MCF 10A (cell line): ENCODE measurements at regions of chr15 and their contacts with region 1.

Region 1: DNA sequence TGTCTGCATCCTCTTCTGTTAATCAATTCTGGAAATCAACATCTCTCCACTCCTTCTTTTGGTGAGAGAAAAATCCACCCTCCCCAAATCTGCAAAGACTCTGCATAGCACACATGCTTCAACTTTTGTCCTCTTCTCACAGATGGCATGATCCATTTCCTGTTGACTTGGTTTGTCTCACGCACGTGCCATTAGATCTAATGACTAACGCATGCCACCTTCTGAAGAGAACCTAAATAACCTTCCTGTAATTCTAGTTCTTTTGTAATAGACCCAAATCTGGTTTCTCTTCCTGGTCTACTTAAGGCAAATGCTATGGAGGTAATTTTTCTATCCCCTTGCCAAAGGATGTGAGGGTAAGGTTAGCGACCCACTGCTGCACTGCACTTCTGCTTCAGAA is 51.0 kb upstream of the ATOSA start:
- DNase-seq: peak; percentile 66
- H3K4me3 Mint-ChIP-seq: no peak overlapping the region
- H3K27ac Mint-ChIP-seq: peak overlapping the region; percentile 49
- H3K4me1 Mint-ChIP-seq: peaks cover 13% of the 10 kb centered on the region
- H3K27me3 Mint-ChIP-seq: no peaks in the 10 kb centered on the region
- CTCF ChIP-seq: no peak

Region 2: DNA sequence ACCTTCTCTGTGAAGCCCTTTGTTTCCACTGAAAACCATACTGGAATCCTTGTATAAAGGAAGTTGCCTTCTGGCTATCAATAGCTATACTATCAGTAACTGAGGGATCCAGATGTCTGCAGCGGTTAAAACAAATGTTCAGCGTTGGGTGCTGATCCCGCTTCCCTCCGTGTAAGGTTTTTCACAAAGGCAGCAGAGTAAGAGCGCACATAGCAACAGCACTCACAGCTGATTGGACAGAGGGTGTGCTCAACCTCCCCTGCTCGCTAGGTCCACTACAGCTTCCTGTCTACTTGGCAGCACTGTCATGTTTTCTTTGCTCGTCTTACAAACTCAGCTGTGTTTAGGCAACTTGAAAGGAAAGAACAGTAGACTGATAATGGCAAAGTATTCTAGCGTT is 78.3 kb before region 1 on chr15:
- CTCF ChIA-PET with region 1: interaction called, 14 read pairs
- POLR2A ChIA-PET with region 1: interaction called, 21 read pairs
- intact Hi-C with region 1: no loop called
- DNase-seq: peak; percentile 90
- H3K4me3 Mint-ChIP-seq: peak overlapping the region; percentile 61
- H3K27ac Mint-ChIP-seq: peak overlapping the region; percentile 94
- H3K4me1 Mint-ChIP-seq: peaks cover 38% of the 10 kb centered on the region
- H3K27me3 Mint-ChIP-seq: no peaks in the 10 kb centered on the region
- CTCF ChIP-seq: no peak

Region 3: GRCh38 chr15:52790162-52790708 is 60.1 kb after region 1 on chr15 and contains the start of gene ONECUT1:
- CTCF ChIA-PET with region 1: no interaction called
- POLR2A ChIA-PET with region 1: no interaction called
- intact Hi-C with region 1: no loop called
- DNase-seq: peak; percentile 50
- H3K4me3 Mint-ChIP-seq: peak within 1 kb of the TSS; percentile 71
- H3K27ac Mint-ChIP-seq: no peak within 1 kb of the TSS
- H3K4me1 Mint-ChIP-seq: no peaks in the 10 kb centered on the region
- H3K27me3 Mint-ChIP-seq: peaks cover 76% of the 10 kb centered on the region
- CTCF ChIP-seq: no peak
- total RNA-seq, gene ONECUT1: not detected in 2 replicates